B cell (primary cell): ENCODE measurements at regions of chr3 and their contacts with region 1.

Region 1: GRCh38 chr3:30693470-30694120 is 87.2 kb downstream of the TGFBR2 start:
- DNase-seq: peak; percentile 77
- ATAC-seq: peak; percentile 87
- H3K4me3 ChIP-seq: no peak overlapping the region
- H3K4me3 Mint-ChIP-seq: no peak overlapping the region
- H3K27ac ChIP-seq: peak overlapping the region in 1 of 2 donors; percentile 48
- H3K27ac Mint-ChIP-seq: peak overlapping the region; percentile 80
- H3K4me1 ChIP-seq: peaks cover 29 to 32% of the 10 kb centered on the region in 2 donors
- H3K4me1 Mint-ChIP-seq: peaks cover 74% of the 10 kb centered on the region
- H3K27me3 ChIP-seq: no peaks in the 10 kb centered on the region
- H3K27me3 Mint-ChIP-seq: no peaks in the 10 kb centered on the region
- CTCF ChIP-seq: peak; percentile 96

Region 2: GRCh38 chr3:30112902-30113484 is 580.6 kb before region 1 on chr3:
- CTCF ChIA-PET with region 1: interaction called, 74 read pairs
- POLR2A ChIA-PET with region 1: interaction called, 4 read pairs
- intact Hi-C with region 1: loop called (anchors 1 kb)
- DNase-seq: peak; percentile 58
- ATAC-seq: peak; percentile 41
- H3K4me3 ChIP-seq: no peak overlapping the region
- H3K4me3 Mint-ChIP-seq: no peak overlapping the region
- H3K27ac ChIP-seq: no peak overlapping the region
- H3K27ac Mint-ChIP-seq: no peak overlapping the region
- H3K4me1 ChIP-seq: no peaks in the 10 kb centered on the region
- H3K4me1 Mint-ChIP-seq: peaks cover 6% of the 10 kb centered on the region
- H3K27me3 ChIP-seq: no peaks in the 10 kb centered on the region
- H3K27me3 Mint-ChIP-seq: no peaks in the 10 kb centered on the region
- CTCF ChIP-seq: peak; percentile 73

Region 3: DNA sequence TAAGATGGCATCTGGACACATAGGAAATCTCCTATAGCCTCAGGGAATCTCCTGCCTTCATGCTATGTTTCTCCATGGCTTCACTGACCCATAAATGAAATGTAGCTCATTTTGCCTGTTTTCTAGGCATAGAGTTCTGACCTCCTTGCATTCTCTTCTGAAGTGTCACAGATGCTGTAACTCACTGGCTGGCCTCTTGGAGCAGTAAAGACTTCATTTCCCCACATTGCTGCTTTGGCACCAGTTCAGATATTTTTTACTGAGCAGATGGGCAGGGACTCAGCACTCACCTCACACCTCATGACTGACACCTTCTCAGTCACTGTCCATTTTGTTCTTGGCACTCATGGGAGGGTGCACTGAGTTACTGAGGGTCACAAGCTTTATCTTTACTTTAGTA is 373.9 kb before region 1 on chr3:
- CTCF ChIA-PET with region 1: interaction called, 38 read pairs
- POLR2A ChIA-PET with region 1: no interaction called
- intact Hi-C with region 1: loop called (anchors 1 kb)
- DNase-seq: peak; percentile 68
- ATAC-seq: peak; percentile 92
- H3K4me3 ChIP-seq: no peak overlapping the region
- H3K4me3 Mint-ChIP-seq: no peak overlapping the region
- H3K27ac ChIP-seq: no peak overlapping the region
- H3K27ac Mint-ChIP-seq: no peak overlapping the region
- H3K4me1 ChIP-seq: peaks cover 5% of the 10 kb centered on the region in 2 donors
- H3K4me1 Mint-ChIP-seq: peaks cover 4% of the 10 kb centered on the region
- H3K27me3 ChIP-seq: no peaks in the 10 kb centered on the region
- H3K27me3 Mint-ChIP-seq: no peaks in the 10 kb centered on the region
- CTCF ChIP-seq: peak; percentile 77

Region 4: DNA sequence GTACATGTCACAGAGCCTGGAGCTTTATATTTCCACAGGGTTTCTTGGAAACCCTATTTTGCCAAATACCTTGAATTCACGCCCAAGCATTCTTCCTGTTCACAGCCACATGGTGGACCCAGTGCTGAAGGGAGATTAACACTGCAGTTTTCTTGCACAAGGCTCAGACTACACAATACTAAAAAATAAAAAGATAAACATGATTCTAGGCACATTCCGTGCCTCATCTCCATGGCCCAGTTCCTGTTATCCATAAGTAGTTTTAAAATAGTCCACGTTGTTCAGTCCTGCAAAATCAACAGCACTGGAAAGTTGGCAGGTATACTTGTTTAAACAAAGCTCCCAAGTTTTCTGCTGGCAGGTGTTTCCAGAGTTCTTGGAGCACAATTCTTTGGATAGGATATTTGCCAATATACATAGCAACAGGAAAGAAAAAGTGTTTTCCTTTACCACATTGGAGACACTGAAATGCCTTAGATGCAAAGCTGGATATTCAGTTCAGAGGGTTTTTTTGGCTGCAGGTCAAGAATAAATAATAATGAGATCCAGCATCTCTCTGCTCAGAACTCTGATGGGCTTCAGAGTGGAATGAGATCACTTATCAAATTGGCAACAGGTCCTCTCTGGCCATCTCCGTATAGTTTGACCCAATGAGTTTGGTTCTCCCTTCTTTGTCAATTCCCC is 175.3 kb before region 1 on chr3:
- CTCF ChIA-PET with region 1: interaction called, 10 read pairs
- POLR2A ChIA-PET with region 1: no interaction called
- intact Hi-C with region 1: no loop called
- DNase-seq: no peak
- ATAC-seq: no peak
- H3K4me3 ChIP-seq: no peak overlapping the region
- H3K4me3 Mint-ChIP-seq: no peak overlapping the region
- H3K27ac ChIP-seq: no peak overlapping the region
- H3K27ac Mint-ChIP-seq: no peak overlapping the region
- H3K4me1 ChIP-seq: no peaks in the 10 kb centered on the region
- H3K4me1 Mint-ChIP-seq: no peaks in the 10 kb centered on the region
- H3K27me3 ChIP-seq: no peaks in the 10 kb centered on the region
- H3K27me3 Mint-ChIP-seq: no peaks in the 10 kb centered on the region
- CTCF ChIP-seq: no peak

Region 5: DNA sequence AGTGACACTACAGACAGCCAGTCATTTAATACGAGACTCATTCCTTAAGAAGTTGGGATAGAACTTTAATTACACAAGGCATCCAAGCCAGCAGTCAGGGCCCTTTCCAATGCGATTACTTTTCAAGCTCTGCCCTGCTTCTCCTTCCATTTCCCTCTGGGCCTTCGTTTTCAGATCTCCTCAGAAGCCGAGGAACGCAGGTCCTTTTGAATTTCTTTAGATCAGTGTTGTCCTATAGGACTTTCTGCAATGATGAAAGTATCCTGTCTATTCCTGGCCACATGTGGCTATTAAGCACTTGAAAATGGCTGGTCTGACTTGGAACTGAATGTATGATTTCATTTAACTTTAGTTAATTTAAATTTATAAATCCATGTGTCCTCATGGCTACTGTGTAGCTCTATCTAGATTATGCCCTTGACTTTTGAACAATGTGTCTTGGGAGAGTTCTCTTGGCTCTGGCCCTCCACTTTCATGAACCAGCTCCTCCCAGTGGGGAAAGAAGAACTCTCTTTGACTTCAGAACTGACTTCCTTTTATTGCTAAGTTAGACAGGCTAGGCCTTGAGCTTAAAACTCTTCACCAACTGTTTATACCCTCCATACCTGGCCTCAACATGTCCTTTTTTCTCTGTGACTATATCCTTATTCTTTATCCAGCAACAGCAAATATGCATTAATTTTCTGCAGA is 64.5 kb before region 1 on chr3:
- CTCF ChIA-PET with region 1: interaction called, 10 read pairs
- POLR2A ChIA-PET with region 1: no interaction called
- intact Hi-C with region 1: loop called (anchors 2 kb)
- DNase-seq: peak; percentile 75
- ATAC-seq: peak; percentile 54
- H3K4me3 ChIP-seq: peak overlapping the region in 3 of 5 experiments; percentile 2 to 46 (median 26)
- H3K4me3 Mint-ChIP-seq: peak overlapping the region; percentile 72
- H3K27ac ChIP-seq: peak overlapping the region; percentile 73 to 89
- H3K27ac Mint-ChIP-seq: peak overlapping the region; percentile 87
- H3K4me1 ChIP-seq: peaks cover 91 to 99% of the 10 kb centered on the region in 2 donors
- H3K4me1 Mint-ChIP-seq: peaks cover 92% of the 10 kb centered on the region
- H3K27me3 ChIP-seq: no peaks in the 10 kb centered on the region
- H3K27me3 Mint-ChIP-seq: no peaks in the 10 kb centered on the region
- CTCF ChIP-seq: peak; percentile 53

Region 6: DNA sequence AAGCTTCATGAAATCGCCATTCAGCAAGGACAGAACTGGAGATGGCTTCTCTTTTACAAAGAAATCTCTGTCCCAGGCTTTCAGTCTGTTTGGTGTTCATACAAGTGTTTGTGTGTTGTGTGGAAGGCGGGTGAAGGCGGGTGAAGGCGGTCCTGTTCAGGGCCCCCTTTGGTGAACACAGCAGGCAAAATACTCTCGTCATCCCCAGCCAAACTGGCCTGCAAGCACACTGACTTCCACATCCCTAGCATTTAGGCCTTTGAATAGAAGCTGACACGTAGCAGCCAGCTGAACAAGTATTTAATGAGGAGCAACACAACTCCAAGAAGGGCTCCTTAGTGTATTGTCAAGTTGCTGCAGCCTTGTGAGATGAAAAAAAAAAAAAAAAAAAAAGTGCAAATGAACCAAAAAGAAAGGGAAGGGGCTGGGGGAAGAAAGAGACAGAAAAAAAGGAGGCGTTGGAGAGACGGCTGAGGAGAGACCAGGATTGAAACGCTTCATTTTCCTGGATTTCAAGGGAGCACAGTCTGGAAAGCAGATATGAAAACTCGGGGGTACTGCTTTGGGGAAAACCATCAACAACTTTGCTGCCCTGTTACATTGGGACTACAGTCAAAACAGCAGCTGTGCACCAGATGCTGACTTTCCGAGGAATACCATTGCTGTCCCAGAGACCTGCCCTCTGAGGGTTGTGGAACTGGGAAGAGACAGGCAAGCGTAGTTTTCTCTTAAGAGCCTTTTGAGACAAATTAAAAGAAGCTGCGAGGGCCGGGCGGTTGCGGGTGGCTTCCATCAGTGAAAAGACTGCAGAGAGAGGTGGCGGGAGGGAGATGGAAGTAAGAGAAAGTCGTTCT is 12.6 kb before region 1 on chr3:
- CTCF ChIA-PET with region 1: interaction called, 32 read pairs
- POLR2A ChIA-PET with region 1: no interaction called
- intact Hi-C with region 1: no loop called
- DNase-seq: no peak
- ATAC-seq: no peak
- H3K4me3 ChIP-seq: no peak overlapping the region
- H3K4me3 Mint-ChIP-seq: peak overlapping the region; percentile 15
- H3K27ac ChIP-seq: peak overlapping the region in 1 of 2 donors; percentile 79
- H3K27ac Mint-ChIP-seq: peak overlapping the region; percentile 85
- H3K4me1 ChIP-seq: peaks cover 23% of the 10 kb centered on the region in 2 donors
- H3K4me1 Mint-ChIP-seq: peaks cover 68% of the 10 kb centered on the region
- H3K27me3 ChIP-seq: no peaks in the 10 kb centered on the region
- H3K27me3 Mint-ChIP-seq: no peaks in the 10 kb centered on the region
- CTCF ChIP-seq: no peak